AG04450 (cell line): ENCODE measurements at regions of chr3 and their contacts with region 1.

Region 1: DNA sequence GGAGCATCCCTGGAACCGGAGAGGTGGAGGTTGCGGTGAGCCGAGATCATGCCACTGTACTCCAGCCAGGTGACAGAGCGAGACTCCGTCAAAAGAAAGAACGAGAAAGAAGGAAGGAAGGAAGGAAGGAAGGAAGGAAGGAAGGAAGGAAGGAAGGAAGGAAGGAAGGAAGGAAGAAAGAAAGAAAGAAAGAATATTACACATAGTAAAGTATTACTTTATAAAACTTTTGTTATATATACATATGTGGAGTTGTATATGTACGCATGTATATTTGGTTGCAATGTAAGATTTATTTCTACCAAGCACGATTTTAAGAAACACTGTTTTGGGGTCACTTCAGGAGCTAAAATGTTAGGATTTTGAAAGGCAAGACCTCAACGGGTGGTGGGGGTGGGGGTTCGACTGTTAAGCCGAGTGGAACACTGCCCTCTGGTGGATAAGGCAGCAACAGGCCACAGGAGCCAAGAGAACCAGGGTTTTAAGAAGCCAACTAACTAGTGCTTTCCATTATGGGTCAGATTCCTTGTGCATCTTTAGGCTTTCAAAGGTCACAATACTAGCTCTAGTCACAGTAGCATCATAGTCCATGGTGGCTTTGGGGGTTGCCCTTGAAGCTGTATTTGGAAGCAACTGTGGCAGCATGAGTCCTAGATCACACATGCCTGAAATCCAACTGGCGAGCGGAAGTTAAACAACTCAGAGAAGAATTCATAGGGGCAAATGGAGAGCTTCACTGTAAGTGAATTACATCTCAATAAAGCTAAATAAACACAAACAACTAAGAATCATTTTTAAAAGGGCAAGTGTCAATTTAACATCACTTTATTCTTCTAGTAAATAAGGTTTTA is 22.5 kb downstream of the GLB1 start:
- DNase-seq: peak; percentile 43
- H3K4me3 ChIP-seq: no peak overlapping the region
- H3K27ac ChIP-seq: no peak overlapping the region
- H3K27me3 ChIP-seq: no peaks in the 10 kb centered on the region
- CTCF ChIP-seq: peak; percentile 97

Region 2: GRCh38 chr3:32922078-32922477 is 152.4 kb before region 1 on chr3:
- CTCF ChIA-PET with region 1: interaction called, 10 read pairs
- POLR2A ChIA-PET with region 1: no interaction called
- DNase-seq: no peak
- H3K4me3 ChIP-seq: no peak overlapping the region
- H3K27ac ChIP-seq: no peak overlapping the region
- H3K27me3 ChIP-seq: peaks cover 6% of the 10 kb centered on the region
- CTCF ChIP-seq: no peak

Region 3: DNA sequence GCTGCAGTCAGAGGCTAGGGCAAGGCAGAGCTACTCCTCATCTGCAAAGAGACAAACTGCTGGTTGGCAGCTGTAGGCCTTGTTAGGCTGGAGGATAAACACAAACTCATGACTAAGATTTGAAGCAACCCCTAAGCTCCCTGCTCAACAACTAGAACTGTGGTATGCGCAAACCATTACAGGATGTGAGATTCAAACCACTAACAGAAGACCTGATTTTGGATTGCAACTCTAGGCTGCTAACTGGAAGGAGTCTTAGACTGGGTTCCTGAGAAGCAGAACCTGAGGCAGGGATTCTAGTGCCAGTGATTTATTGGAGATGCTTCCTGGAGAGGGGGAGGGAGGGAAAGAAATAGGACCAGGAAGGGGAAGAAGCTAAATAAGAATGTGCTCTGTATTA is 100.5 kb before region 1 on chr3:
- CTCF ChIA-PET with region 1: interaction called, 19 read pairs
- POLR2A ChIA-PET with region 1: no interaction called
- DNase-seq: peak; percentile 29
- H3K4me3 ChIP-seq: no peak overlapping the region
- H3K27ac ChIP-seq: no peak overlapping the region
- H3K27me3 ChIP-seq: peaks cover 2% of the 10 kb centered on the region
- CTCF ChIP-seq: no peak

Region 4: DNA sequence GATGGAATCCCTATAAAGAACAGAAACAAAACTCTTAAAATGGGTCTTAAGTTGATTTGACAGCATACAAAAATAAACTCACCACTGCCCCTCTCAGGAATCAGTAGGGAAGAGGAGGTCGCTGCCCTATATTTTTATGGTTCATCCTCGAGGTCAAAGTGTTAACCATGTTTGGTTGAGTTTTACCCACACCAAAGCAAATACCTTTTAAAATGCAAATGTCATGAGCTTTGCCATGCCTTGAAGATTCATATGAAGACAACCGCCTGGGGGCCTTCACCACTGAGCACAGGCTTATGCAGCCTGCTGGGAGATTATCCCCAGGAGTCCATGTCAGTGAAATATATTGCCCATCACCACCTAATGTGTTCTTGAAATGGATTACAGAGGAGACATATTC is 43.6 kb before region 1 on chr3:
- CTCF ChIA-PET with region 1: interaction called, 17 read pairs
- POLR2A ChIA-PET with region 1: no interaction called
- DNase-seq: no peak
- H3K4me3 ChIP-seq: no peak overlapping the region
- H3K27ac ChIP-seq: no peak overlapping the region
- H3K27me3 ChIP-seq: no peaks in the 10 kb centered on the region
- CTCF ChIP-seq: no peak

Region 5: DNA sequence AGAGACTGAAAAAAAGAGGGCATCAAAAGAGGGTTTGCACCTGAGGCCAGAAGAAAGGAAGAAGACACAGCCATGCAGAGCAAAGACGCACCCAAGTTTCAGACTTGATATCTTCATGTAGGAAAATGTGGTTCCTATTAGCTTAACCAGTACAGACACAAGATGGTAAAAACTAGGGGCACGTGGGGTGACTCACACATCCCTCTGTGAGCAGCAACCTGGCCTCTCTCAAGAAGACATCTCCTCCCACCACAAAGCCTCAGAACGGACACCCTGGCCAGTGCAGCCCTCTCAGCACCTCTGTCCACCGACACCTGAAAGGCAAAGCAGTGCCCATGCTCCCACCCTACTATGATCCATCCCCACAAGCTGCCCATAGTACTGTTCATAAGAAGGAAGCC is 10.8 kb before region 1 on chr3:
- CTCF ChIA-PET with region 1: interaction called, 79 read pairs
- POLR2A ChIA-PET with region 1: no interaction called
- DNase-seq: no peak
- H3K4me3 ChIP-seq: no peak overlapping the region
- H3K27ac ChIP-seq: no peak overlapping the region
- H3K27me3 ChIP-seq: no peaks in the 10 kb centered on the region
- CTCF ChIP-seq: no peak

Region 6: GRCh38 chr3:33105341-33105948 is 31.0 kb after region 1 on chr3:
- CTCF ChIA-PET with region 1: interaction called, 15 read pairs
- POLR2A ChIA-PET with region 1: no interaction called
- DNase-seq: no peak
- H3K4me3 ChIP-seq: no peak overlapping the region
- H3K27ac ChIP-seq: no peak overlapping the region
- H3K27me3 ChIP-seq: peaks cover 2% of the 10 kb centered on the region
- CTCF ChIP-seq: no peak